Right lobe of liver (tissue), 6 donors: ENCODE measurements at regions of chr2 and their contacts with region 1.

Region 1: DNA sequence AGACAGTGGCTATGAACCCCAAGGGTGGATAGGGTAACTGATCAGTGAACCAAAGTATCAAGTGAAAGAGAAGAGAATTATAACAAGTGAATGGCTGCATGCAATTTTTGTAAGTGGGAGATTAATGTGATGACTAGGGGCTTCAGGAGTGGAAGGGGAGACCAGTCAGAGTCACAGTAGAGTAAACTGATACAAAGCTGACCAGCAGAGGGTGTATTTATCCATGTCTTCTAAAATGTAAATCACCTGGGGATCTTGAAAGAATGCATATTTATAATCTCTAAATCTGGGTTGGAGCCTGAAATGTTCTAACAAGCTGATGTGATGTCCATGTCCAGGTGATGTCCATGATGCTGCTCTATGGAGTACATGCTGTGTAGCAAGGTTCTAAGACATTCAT is 1351.3 kb upstream of the CHAC2 start:
- DNase-seq: no peak
- ATAC-seq: peak; percentile 79 to 92 (median 80)
- H3K4me3 ChIP-seq: no peak overlapping the region
- H3K27ac ChIP-seq: no peak overlapping the region
- H3K4me1 ChIP-seq: no peaks in the 10 kb centered on the region
- H3K27me3 ChIP-seq: no peaks in the 10 kb centered on the region
- CTCF ChIP-seq: peak; percentile 34 to 63 (median 48)
- POLR2A ChIP-seq: no peak

Region 2: GRCh38 chr2:52613064-52613463 is 196.7 kb after region 1 on chr2:
- intact Hi-C with region 1: loop called in 1 of 2 experiments (anchors 10 kb)
- DNase-seq: no peak
- ATAC-seq: peak; percentile 69 to 96 (median 86)
- H3K4me3 ChIP-seq: no peak overlapping the region
- H3K27ac ChIP-seq: no peak overlapping the region
- H3K4me1 ChIP-seq: no peaks in the 10 kb centered on the region
- H3K27me3 ChIP-seq: no peaks in the 10 kb centered on the region
- CTCF ChIP-seq: peak; percentile 33 to 48 (median 44)
- POLR2A ChIP-seq: no peak